ENCODE measurements at regions of chr2 and their contacts with region 1.

Region 1: DNA sequence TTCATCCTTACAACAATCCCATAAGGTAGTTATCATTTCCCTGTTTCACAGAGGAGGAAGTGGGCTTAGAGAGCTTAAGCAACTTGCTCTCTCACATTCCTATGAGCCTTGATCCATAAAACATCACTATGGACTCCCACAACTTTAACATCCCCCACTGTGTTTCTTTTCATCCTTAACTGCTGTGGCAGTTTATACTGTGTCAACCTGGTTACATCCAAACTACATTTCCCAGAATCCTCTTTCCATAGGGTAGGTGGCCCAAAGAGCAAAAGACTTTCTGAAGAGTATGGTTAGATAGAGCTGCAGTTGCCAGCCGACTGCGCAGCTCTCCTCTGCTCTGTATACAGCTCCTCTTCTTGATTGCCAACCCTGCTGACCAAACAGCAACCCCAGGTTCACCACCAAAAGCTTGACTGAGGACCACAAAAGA is 22.5 kb downstream of the MAP3K2 start:
- DNase-seq: no peak
- H3K4me3 ChIP-seq: no peak overlapping the region
- CTCF ChIP-seq: no peak

Region 2: GRCh38 chr2:127305990-127306585 is 59.1 kb before region 1 on chr2:
- in situ Hi-C with region 1: loop called (anchors 5 kb)
- DNase-seq: no peak
- H3K4me3 ChIP-seq: no peak overlapping the region
- CTCF ChIP-seq: no peak

Region 3: GRCh38 chr2:127408004-127408806 is 43.0 kb after region 1 on chr2:
- in situ Hi-C with region 1: no loop called
- DNase-seq: peak; percentile 57
- H3K4me3 ChIP-seq: peak overlapping the region; percentile 32
- CTCF ChIP-seq: no peak

Region 4: GRCh38 chr2:127437781-127438726 is 72.8 kb after region 1 on chr2:
- in situ Hi-C with region 1: no loop called
- DNase-seq: no peak
- H3K4me3 ChIP-seq: no peak overlapping the region
- CTCF ChIP-seq: no peak

Region 5: GRCh38 chr2:127649684-127650040 is 284.4 kb after region 1 on chr2:
- in situ Hi-C with region 1: no loop called
- DNase-seq: peak; percentile 70
- H3K4me3 ChIP-seq: no peak overlapping the region
- CTCF ChIP-seq: peak; percentile 88